ENCODE measurements at regions of chr6 and their contacts with region 1.

Region 1: GRCh38 chr6:159941286-159942113 is 27.4 kb upstream of the IGF2R start:
- DNase-seq: peak in 6 of 9 experiments; percentile 9 to 82 (median 23)
- ATAC-seq: peak; percentile 84
- H3K4me3 ChIP-seq: no peak overlapping the region
- H3K4me3 Mint-ChIP-seq: no peak overlapping the region
- H3K27ac ChIP-seq: no peak overlapping the region
- H3K27ac Mint-ChIP-seq: no peak overlapping the region
- H3K4me1 ChIP-seq: no peaks in the 10 kb centered on the region
- H3K4me1 Mint-ChIP-seq: peaks cover 3% of the 10 kb centered on the region
- H3K27me3 ChIP-seq: no peaks in the 10 kb centered on the region
- H3K27me3 Mint-ChIP-seq: no peaks in the 10 kb centered on the region
- CTCF ChIP-seq: peak; percentile 49

Region 2: DNA sequence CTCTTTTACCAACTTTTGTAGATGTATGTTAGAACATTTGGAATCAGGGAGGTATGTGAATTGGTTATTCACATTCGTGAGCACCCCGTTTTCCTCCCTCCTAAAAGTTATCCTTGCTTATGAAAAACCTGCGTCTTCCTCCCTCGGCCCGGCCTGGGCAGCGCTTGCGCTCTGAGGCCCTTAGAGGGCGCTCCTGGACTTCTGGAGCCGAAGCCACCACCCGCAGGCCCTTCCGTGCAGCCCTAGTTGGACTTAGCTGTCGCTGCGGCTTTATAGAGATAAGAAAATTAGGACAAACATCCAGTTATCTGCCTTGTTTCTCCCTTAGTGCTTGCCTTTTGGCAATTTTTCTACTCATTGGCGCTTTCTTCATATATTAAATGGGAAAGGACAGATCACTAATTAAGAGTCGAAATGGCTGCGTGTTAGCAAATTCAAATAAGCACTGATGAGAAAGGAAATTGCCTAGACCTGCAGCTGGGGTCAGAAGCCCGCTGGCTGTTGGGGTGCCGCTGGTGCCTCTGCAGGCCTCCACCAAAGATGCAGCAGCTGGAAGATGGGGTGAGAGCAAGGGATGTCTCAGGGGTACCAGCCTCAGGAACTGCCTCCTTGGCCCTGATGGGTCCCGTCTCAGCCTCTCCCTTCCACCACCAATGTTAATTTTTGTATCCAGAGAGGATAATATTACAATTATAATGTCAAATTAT is 767.1 kb before region 1 on chr6:
- CTCF ChIA-PET with region 1: interaction called, 3 read pairs
- POLR2A ChIA-PET with region 1: no interaction called
- intact Hi-C with region 1: loop called (anchors 2 to 5 kb)
- DNase-seq: peak; percentile 34 to 72 (median 61)
- ATAC-seq: peak; percentile 75
- H3K4me3 ChIP-seq: no peak overlapping the region
- H3K4me3 Mint-ChIP-seq: peak overlapping the region; percentile 29
- H3K27ac ChIP-seq: no peak overlapping the region
- H3K27ac Mint-ChIP-seq: no peak overlapping the region
- H3K4me1 ChIP-seq: no peaks in the 10 kb centered on the region
- H3K4me1 Mint-ChIP-seq: peaks cover 11% of the 10 kb centered on the region
- H3K27me3 ChIP-seq: peaks cover 8 to 11% of the 10 kb centered on the region in 2 experiments
- H3K27me3 Mint-ChIP-seq: peaks cover 70% of the 10 kb centered on the region
- CTCF ChIP-seq: peak; percentile 83

Region 3: DNA sequence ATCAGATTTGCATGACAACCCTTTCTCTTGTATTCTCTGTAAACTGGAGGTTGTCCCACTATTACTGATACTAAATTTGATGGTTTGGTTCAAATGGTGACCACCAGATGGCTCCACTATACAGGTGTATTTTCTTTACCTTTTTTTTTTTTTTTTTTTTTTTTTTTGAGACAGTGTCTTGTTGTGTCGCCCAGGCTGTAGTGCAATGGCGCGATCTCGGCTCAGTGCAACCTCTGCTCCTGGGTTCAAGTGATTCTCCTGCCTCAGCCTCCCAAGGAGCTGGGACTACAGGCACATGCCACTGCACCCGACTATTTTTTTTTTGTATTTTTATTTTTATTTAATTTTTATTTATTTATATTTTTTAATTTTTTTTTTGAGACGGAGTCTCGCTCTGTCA is 220.8 kb before region 1 on chr6:
- CTCF ChIA-PET with region 1: interaction called, 9 read pairs
- POLR2A ChIA-PET with region 1: no interaction called
- intact Hi-C with region 1: loop called (anchors 1 kb)
- DNase-seq: peak in 5 of 9 experiments; percentile 33 to 84 (median 53)
- ATAC-seq: peak; percentile 74
- H3K4me3 ChIP-seq: no peak overlapping the region
- H3K4me3 Mint-ChIP-seq: no peak overlapping the region
- H3K27ac ChIP-seq: no peak overlapping the region
- H3K27ac Mint-ChIP-seq: no peak overlapping the region
- H3K4me1 ChIP-seq: peaks cover 6% of the 10 kb centered on the region
- H3K4me1 Mint-ChIP-seq: peaks cover 16% of the 10 kb centered on the region
- H3K27me3 ChIP-seq: no peaks in the 10 kb centered on the region
- H3K27me3 Mint-ChIP-seq: no peaks in the 10 kb centered on the region
- CTCF ChIP-seq: peak; percentile 65

Region 4: DNA sequence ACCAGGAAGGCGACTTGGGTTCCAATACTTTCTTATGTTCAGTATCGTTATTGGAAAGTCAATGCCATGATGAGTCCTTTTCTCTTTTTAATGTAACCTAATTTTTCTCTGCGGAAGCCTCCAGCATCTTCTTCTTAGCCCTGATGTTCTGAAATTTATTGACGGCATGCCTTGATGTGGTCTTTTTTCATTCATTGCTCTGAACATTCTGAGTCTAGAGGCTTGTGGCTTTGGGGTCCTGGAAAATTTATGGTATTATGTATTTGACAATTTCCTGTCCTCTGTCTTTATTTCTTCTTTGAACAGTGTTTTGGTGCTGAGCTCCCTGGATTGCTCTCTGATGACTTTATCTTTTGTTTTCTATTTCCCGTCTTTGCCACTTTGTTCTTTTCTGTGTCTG is 79.4 kb before region 1 on chr6:
- CTCF ChIA-PET with region 1: no interaction called
- POLR2A ChIA-PET with region 1: no interaction called
- intact Hi-C with region 1: loop called (anchors 5 kb)
- DNase-seq: peak in 2 of 9 experiments; percentile 42 to 70
- ATAC-seq: peak; percentile 69
- H3K4me3 ChIP-seq: no peak overlapping the region
- H3K4me3 Mint-ChIP-seq: peak overlapping the region; percentile 10
- H3K27ac ChIP-seq: no peak overlapping the region
- H3K27ac Mint-ChIP-seq: peak overlapping the region; percentile 64
- H3K4me1 ChIP-seq: peaks cover 27% of the 10 kb centered on the region
- H3K4me1 Mint-ChIP-seq: peaks cover 22% of the 10 kb centered on the region
- H3K27me3 ChIP-seq: no peaks in the 10 kb centered on the region
- H3K27me3 Mint-ChIP-seq: peaks cover 3% of the 10 kb centered on the region
- CTCF ChIP-seq: no peak

Measured in CD8-positive, alpha-beta T cell (primary cell).